Activated T-helper 2 cell treated with anti-CD3 and anti-CD28 coated beads, Interferon-gamma antibody, Interleukin-2, Interleukin-4, amounts not matched to agents 10 μg/mL and 5 μg/mL and 100 μg/mL, durations not matched to agents 14 hours and 24 hours and 36 hours (primary cell): ENCODE measurements at regions of chr7 and their contacts with region 1.

Region 1: DNA sequence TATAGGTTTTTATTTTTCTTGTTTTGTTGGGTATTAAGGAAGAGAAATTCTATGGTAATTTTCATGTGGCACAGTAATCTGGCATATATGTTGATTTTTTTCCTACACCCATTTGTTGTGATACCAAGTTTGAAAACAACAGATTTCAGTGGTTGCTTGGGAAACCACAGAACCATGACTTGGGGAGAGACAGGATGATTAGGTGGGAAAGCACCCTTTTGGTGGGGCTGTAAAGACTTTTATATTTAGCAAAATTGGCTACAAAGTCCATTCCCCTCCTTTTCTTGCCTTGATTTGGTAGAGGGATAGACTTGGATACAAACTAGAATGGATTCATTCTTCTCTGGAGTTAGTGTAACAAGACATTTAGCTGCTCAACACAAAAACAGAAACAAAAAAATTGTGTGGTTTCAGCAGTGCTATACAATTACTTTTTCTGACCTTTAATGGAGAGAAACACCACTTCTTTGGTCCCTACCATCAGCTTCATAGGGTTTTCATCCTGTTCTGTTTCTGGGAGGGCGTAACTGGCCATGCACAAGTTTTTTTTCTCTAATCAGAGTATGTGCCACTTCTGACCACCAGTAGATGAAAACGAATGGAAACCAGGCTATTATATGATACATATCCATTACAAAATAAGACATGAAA is 52.7 kb downstream of the FIGNL1 start:
- DNase-seq: no peak
- H3K4me3 Mint-ChIP-seq: no peak overlapping the region
- H3K27ac Mint-ChIP-seq: peak overlapping the region; percentile 94
- H3K4me1 Mint-ChIP-seq: peaks cover 62% of the 10 kb centered on the region
- H3K27me3 Mint-ChIP-seq: no peaks in the 10 kb centered on the region

Region 2: GRCh38 chr7:50212666-50213621 is 184.5 kb before region 1 on chr7:
- intact Hi-C with region 1: loop called (anchors 1 kb)
- DNase-seq: no peak
- H3K4me3 Mint-ChIP-seq: peak overlapping the region; percentile 64
- H3K27ac Mint-ChIP-seq: peak overlapping the region; percentile 92
- H3K4me1 Mint-ChIP-seq: peaks cover 90% of the 10 kb centered on the region
- H3K27me3 Mint-ChIP-seq: no peaks in the 10 kb centered on the region

Region 3: GRCh38 chr7:50349963-50350944 is 47.2 kb before region 1 on chr7:
- intact Hi-C with region 1: loop called (anchors 1 kb)
- DNase-seq: peak; percentile 80
- H3K4me3 Mint-ChIP-seq: peak overlapping the region; percentile 49
- H3K27ac Mint-ChIP-seq: peak overlapping the region; percentile 91
- H3K4me1 Mint-ChIP-seq: peaks cover 96% of the 10 kb centered on the region
- H3K27me3 Mint-ChIP-seq: no peaks in the 10 kb centered on the region

Region 4: GRCh38 chr7:50418086-50418515 is 20.7 kb after region 1 on chr7:
- intact Hi-C with region 1: loop called (anchors 1 kb)
- DNase-seq: peak; percentile 66
- H3K4me3 Mint-ChIP-seq: no peak overlapping the region
- H3K27ac Mint-ChIP-seq: no peak overlapping the region
- H3K4me1 Mint-ChIP-seq: peaks cover 28% of the 10 kb centered on the region
- H3K27me3 Mint-ChIP-seq: no peaks in the 10 kb centered on the region

Region 5: GRCh38 chr7:50653126-50653864 is 255.8 kb after region 1 on chr7:
- intact Hi-C with region 1: no loop called
- DNase-seq: peak; percentile 4
- H3K4me3 Mint-ChIP-seq: no peak overlapping the region
- H3K27ac Mint-ChIP-seq: no peak overlapping the region
- H3K4me1 Mint-ChIP-seq: no peaks in the 10 kb centered on the region
- H3K27me3 Mint-ChIP-seq: peaks cover 6% of the 10 kb centered on the region

Region 6: DNA sequence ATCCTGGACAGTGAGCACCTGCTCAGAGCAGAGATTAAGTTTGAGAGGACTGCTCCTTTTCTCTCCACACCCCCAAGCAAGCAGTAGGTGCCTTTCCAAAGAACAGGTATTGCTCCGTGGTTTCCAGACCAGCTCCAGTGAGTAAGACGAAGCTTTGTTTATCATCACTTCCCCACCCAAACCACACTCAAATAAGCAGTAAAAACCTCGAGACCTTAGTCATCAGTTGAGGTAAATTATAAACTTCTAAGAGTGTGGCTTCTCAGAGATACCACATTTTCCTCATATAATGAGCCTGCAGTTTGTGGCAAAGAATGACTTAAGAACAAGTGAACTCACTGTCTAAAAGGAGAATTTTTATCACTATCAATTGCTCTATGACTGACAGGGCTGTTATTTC is 435.3 kb after region 1 on chr7:
- intact Hi-C with region 1: loop called (anchors 5 kb)
- DNase-seq: peak; percentile 44
- H3K4me3 Mint-ChIP-seq: no peak overlapping the region
- H3K27ac Mint-ChIP-seq: peak overlapping the region; percentile 8
- H3K4me1 Mint-ChIP-seq: peaks cover 42% of the 10 kb centered on the region
- H3K27me3 Mint-ChIP-seq: peaks cover 34% of the 10 kb centered on the region